ENCODE measurements at regions of chr12 and their contacts with region 1.

Region 1: DNA sequence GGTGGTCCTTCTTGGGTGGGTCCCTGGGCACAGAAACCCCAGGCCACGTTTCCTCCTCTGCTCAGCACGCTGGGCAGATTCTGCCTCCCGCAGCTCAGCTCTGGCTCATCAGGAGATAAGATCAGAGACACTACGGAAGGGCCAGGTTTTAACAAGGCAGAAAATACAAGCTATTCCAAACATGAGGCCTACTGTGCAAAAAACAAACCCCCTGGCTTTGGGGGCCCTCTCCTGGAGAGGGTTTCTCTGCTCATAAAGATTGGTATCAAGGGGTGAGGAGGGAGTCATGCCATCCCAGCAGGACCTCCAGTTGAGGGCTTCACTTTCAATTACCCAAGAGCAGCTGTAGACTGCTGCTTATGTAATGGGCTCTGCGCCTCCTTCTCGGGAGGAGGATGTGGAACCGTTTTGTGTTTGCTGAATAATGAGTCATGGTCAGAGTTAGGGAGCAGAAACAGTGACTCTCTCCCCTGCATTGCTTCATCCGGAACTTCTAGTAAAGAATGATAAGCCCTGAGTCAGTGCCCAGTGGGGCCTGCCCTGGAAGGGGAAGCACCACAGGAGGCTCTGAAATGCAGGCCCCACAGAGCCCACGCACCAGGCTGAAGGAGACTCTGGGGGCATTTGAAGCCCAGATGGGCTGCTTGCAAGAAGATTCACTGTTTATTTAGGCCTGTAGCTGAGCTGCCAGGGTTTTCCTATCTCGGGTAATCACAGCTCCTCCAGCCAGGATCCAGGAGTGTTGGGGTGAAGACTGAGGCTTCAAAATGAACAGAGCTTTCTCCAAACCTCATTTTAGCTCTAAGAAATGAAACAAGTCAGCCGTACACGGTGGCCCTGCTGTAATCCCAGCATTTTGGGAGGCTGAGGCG is 79.3 kb downstream of the SSPN start:
- DNase-seq: peak; percentile 97 to 99 (median 99)
- H3K4me3 ChIP-seq: peak overlapping the region in 1 of 3 experiments; percentile 52
- H3K4me3 Mint-ChIP-seq: peak overlapping the region; percentile 64 to 84
- H3K27ac ChIP-seq: peak overlapping the region; percentile 69 to 90
- H3K27ac Mint-ChIP-seq: peak overlapping the region; percentile 94 to 99 (median 97)
- H3K4me1 ChIP-seq: peaks cover 42 to 50% of the 10 kb centered on the region in 2 donors
- H3K4me1 Mint-ChIP-seq: peaks cover 55% of the 10 kb centered on the region
- H3K27me3 ChIP-seq: no peaks in the 10 kb centered on the region
- H3K27me3 Mint-ChIP-seq: peaks cover 0 to 3% (median 2%) of the 10 kb centered on the region in 3 donors
- CTCF ChIP-seq: no peak

Region 2: GRCh38 chr12:26126340-26127284 is 148.1 kb before region 1 on chr12:
- intact Hi-C with region 1: loop called in 1 of 2 experiments (anchors 10 kb)
- DNase-seq: peak; percentile 52 to 57 (median 53)
- H3K4me3 ChIP-seq: peak overlapping the region; percentile 19 to 75 (median 35)
- H3K4me3 Mint-ChIP-seq: peak overlapping the region; percentile 86 to 97
- H3K27ac ChIP-seq: no peak overlapping the region
- H3K27ac Mint-ChIP-seq: no peak overlapping the region
- H3K4me1 ChIP-seq: peaks cover 49 to 59% of the 10 kb centered on the region in 2 donors
- H3K4me1 Mint-ChIP-seq: peaks cover 51% of the 10 kb centered on the region
- H3K27me3 ChIP-seq: peaks cover 64 to 67% of the 10 kb centered on the region in 2 donors
- H3K27me3 Mint-ChIP-seq: peaks cover 69 to 78% (median 73%) of the 10 kb centered on the region in 3 donors
- CTCF ChIP-seq: no peak

Region 3: DNA sequence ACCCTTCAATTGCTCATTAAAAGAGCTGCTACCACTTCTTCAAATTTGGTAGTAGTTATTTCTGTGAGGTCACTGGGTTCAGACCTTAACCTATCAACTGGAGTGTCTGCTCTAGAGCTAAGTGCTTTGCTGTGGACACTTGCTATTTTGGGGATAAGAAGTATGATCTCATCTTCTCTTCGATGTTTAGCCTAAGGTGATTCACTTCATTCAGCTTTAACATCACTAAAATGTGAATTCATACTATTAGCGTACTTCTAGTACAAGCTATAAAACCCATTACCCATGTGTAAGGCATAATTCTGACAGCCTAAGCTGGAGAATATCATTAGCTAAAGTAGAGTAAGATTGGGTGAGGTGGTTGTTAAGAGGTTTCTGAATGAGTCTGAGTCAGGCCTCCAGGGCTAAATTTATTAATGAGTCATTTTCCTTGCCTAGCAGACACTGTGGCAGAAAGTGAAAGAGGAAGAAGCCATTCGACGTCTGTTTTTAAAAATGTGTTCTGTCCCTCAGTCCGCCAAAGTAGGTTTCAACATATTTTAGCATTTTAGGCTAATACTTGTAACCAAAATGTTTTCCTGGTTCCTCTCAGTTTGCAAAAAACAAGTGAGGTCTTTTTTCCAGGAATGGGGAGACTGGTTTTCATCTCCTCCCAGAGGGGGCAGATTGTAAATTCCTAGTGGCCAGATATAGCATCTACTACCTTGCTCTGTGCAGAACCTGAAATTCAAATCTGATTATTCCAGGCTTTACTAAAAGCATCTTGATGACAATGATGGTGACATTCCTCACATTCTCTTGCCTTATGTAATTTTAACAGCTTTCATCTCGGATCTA is 24.3 kb after region 1 on chr12:
- intact Hi-C with region 1: loop called in 1 of 2 experiments (anchors 2 kb)
- DNase-seq: peak; percentile 83 to 94 (median 91)
- H3K4me3 ChIP-seq: peak overlapping the region; percentile 8 to 45 (median 41)
- H3K4me3 Mint-ChIP-seq: peak overlapping the region; percentile 1 to 17
- H3K27ac ChIP-seq: peak overlapping the region in 1 of 2 donors; percentile 74
- H3K27ac Mint-ChIP-seq: peak overlapping the region; percentile 15 to 85 (median 84)
- H3K4me1 ChIP-seq: peaks cover 20 to 21% of the 10 kb centered on the region in 2 donors
- H3K4me1 Mint-ChIP-seq: peaks cover 25% of the 10 kb centered on the region
- H3K27me3 ChIP-seq: no peaks in the 10 kb centered on the region
- H3K27me3 Mint-ChIP-seq: peaks cover 0 to 2% (median 2%) of the 10 kb centered on the region in 3 donors
- CTCF ChIP-seq: no peak

Region 4: DNA sequence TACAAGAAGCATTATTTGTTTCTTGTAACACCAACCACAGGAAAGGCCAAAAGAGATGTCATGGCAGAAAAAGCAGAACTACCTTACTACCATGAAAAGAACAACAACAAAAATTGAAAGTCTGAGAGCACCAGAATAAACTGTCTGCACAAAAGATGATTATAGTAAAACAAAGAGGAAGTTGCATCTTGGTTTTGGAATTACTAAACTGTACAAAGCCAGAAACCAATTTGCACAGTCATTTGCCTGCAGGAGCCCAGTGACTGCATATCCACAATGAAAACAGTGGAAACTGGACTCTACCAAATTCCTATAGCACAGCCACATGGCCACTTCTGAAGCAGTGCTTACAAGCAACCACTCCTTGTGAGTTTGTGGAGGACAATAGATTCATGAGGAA is 196.9 kb after region 1 on chr12:
- intact Hi-C with region 1: loop called in 1 of 2 experiments (anchors 10 kb)
- DNase-seq: peak; percentile 73 to 88 (median 75)
- H3K4me3 ChIP-seq: peak overlapping the region in 1 of 3 experiments; percentile 29
- H3K4me3 Mint-ChIP-seq: peak overlapping the region in 1 of 2 donors; percentile 49
- H3K27ac ChIP-seq: peak overlapping the region in 1 of 2 donors; percentile 84
- H3K27ac Mint-ChIP-seq: peak overlapping the region; percentile 75 to 95 (median 88)
- H3K4me1 ChIP-seq: peaks cover 36 to 40% of the 10 kb centered on the region in 2 donors
- H3K4me1 Mint-ChIP-seq: peaks cover 47% of the 10 kb centered on the region
- H3K27me3 ChIP-seq: no peaks in the 10 kb centered on the region
- H3K27me3 Mint-ChIP-seq: peaks cover 0 to 1% (median 0%) of the 10 kb centered on the region in 3 donors
- CTCF ChIP-seq: no peak

Measured in CD14-positive monocyte (primary cell).